ENCODE measurements at regions of chrX and their contacts with region 1.

Region 1: GRCh38 chrX:110450050-110450449 is 91.4 kb downstream of the RTL9 start:
- DNase-seq: peak; percentile 61
- ATAC-seq: peak; percentile 86 to 91
- H3K4me3 ChIP-seq: no peak overlapping the region
- H3K27ac ChIP-seq: no peak overlapping the region
- H3K4me1 ChIP-seq: no peaks in the 10 kb centered on the region
- H3K27me3 ChIP-seq: no peaks in the 10 kb centered on the region
- CTCF ChIP-seq: peak; percentile 67

Region 2: DNA sequence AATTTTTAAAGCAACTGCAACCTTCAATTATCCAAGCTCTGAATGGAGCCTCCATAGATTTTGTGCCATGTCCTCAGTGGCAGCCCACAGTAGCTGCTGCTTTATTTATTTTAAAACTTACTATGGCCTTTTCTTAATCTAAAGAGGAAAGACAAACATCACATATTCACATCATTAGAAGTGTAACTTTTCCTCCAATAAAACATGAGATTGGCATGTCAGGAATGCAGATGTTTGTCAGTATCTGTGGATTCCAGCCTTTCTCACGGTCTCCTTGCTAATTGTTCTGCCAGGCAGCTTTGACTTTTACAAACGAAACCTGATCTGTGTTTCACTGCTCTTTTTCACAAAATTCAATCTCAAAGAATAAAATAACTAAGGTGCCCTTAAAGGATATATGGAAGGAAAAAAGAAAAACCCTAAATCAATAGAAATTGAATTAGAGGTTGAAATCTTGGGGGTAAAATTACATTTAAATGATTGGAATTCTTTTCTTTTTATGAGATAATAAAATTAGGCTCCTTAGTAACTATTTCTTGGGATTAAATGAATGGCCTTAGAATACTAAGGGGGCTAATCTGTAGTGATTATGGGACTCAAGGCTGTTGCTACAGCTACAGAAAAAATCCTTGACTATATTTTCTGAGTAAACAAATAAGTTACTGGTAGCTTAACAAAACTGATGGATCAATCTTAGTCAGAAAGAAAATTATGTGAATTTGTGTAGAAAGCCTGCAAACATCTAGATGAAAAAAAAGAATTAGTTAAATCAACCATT is 59.9 kb after region 1 on chrX:
- intact Hi-C with region 1: no loop called
- DNase-seq: no peak
- ATAC-seq: no peak
- H3K4me3 ChIP-seq: no peak overlapping the region
- H3K27ac ChIP-seq: no peak overlapping the region
- H3K4me1 ChIP-seq: no peaks in the 10 kb centered on the region
- H3K27me3 ChIP-seq: no peaks in the 10 kb centered on the region
- CTCF ChIP-seq: no peak

Region 3: GRCh38 chrX:110847334-110847733 is 397.3 kb after region 1 on chrX:
- intact Hi-C with region 1: loop called (anchors 10 kb)
- DNase-seq: no peak
- ATAC-seq: peak in 1 of 2 donors; percentile 75
- H3K4me3 ChIP-seq: no peak overlapping the region
- H3K27ac ChIP-seq: no peak overlapping the region
- H3K4me1 ChIP-seq: no peaks in the 10 kb centered on the region
- H3K27me3 ChIP-seq: no peaks in the 10 kb centered on the region
- CTCF ChIP-seq: peak; percentile 51

Measured in lower lobe of right lung (tissue), 2 donors.